K562 (cell line): ENCODE measurements at regions of chr16 and their contacts with region 1.

Region 1: GRCh38 chr16:10529895-10530669 is 50.3 kb downstream of the EMP2 start:
- DNase-seq: no peak
- ATAC-seq: no peak
- H3K4me3 ChIP-seq: no peak overlapping the region
- H3K27ac ChIP-seq: no peak overlapping the region
- H3K4me1 ChIP-seq: no peaks in the 10 kb centered on the region
- H3K27me3 ChIP-seq: peaks cover 29 to 40% of the 10 kb centered on the region in 2 experiments; a peak in 4 of 5 replicates
- CTCF ChIP-seq: no peak
- EP300 ChIP-seq: no peak
- POLR2A ChIP-seq: no peak
- RAD21 ChIP-seq: no peak

Region 2: GRCh38 chr16:10911267-10911666 is 381.2 kb after region 1 on chr16:
- CTCF ChIA-PET with region 1: no interaction called
- POLR2A ChIA-PET with region 1: interaction called, 5 read pairs
- in situ Hi-C with region 1: loop called (anchors 5 kb)
- intact Hi-C with region 1: no loop called
- DNase-seq: no peak
- ATAC-seq: no peak
- H3K4me3 ChIP-seq: no peak overlapping the region
- H3K27ac ChIP-seq: no peak overlapping the region
- H3K4me1 ChIP-seq: peaks cover 0 to 17% of the 10 kb centered on the region in 2 experiments; a peak in 2 of 5 replicates
- H3K27me3 ChIP-seq: peaks cover 42 to 70% of the 10 kb centered on the region in 2 experiments
- CTCF ChIP-seq: no peak
- EP300 ChIP-seq: no peak
- POLR2A ChIP-seq: no peak
- RAD21 ChIP-seq: no peak

Region 3: DNA sequence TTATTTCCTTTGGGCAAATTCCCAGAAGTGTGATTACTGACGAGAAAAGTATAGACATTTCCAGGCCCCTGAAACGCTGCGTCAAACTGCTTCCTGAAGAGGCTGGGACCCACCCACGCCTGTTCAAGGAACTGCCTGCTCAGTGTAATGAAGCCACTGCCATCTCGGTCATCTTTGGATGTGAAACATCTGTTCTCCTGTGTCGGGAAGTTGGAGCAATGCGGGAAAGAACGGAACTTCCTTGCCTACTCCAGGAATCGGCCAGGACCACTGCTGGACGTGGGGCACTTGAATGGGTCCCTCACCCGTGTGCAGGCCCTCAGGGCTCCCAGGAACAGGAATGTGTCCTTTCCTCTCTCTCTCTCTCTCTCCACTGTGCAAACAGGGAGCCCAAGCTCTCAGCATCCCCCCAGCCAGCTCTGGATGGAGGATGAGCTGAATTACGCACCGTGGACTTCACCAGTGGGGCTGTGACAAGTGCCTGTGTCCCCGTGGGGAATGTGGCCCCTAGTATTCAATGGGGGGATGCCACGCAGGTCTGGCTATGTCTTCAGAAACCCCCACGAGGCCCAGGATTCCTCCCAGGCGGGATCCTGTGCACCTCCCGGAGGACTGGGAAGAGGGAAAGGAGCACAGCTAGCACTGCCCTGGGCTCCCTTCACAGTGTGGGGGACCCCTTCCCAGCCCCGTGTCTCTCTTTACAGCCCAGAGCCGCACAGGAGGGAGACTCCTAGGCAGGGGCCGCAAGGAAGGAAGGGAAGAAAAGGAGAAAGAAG is 1074.9 kb after region 1 on chr16:
- CTCF ChIA-PET with region 1: no interaction called
- POLR2A ChIA-PET with region 1: no interaction called
- in situ Hi-C with region 1: no loop called
- intact Hi-C with region 1: no loop called
- DNase-seq: no peak
- ATAC-seq: no peak
- H3K4me3 ChIP-seq: no peak overlapping the region
- H3K27ac ChIP-seq: no peak overlapping the region
- H3K4me1 ChIP-seq: no peaks in the 10 kb centered on the region; a peak in 1 of 5 replicates
- H3K27me3 ChIP-seq: peaks cover 0 to 18% of the 10 kb centered on the region in 2 experiments; a peak in 2 of 5 replicates
- CTCF ChIP-seq: no peak
- EP300 ChIP-seq: no peak
- POLR2A ChIP-seq: no peak
- RAD21 ChIP-seq: no peak